ENCODE measurements at regions of chr12 and their contacts with region 1.

Region 1: GRCh38 chr12:102484428-102484958 is 4.1 kb upstream of the IGF1 start:
- DNase-seq: peak; percentile 16
- H3K4me3 ChIP-seq: no peak overlapping the region
- H3K27ac ChIP-seq: no peak overlapping the region
- H3K4me1 ChIP-seq: no peaks in the 10 kb centered on the region
- H3K27me3 ChIP-seq: no peaks in the 10 kb centered on the region
- CTCF ChIP-seq: peak; percentile 82 to 83

Region 2: GRCh38 chr12:101773650-101774162 is 710.8 kb before region 1 on chr12:
- CTCF ChIA-PET with region 1: no interaction called
- dilution Hi-C with region 1: no loop called
- in situ Hi-C with region 1: no loop called
- intact Hi-C with region 1: loop called (anchors 2 kb)
- DNase-seq: peak; percentile 57
- H3K4me3 ChIP-seq: no peak overlapping the region
- H3K27ac ChIP-seq: no peak overlapping the region
- H3K4me1 ChIP-seq: no peaks in the 10 kb centered on the region
- H3K27me3 ChIP-seq: no peaks in the 10 kb centered on the region
- CTCF ChIP-seq: peak; percentile 83 to 96

Region 3: DNA sequence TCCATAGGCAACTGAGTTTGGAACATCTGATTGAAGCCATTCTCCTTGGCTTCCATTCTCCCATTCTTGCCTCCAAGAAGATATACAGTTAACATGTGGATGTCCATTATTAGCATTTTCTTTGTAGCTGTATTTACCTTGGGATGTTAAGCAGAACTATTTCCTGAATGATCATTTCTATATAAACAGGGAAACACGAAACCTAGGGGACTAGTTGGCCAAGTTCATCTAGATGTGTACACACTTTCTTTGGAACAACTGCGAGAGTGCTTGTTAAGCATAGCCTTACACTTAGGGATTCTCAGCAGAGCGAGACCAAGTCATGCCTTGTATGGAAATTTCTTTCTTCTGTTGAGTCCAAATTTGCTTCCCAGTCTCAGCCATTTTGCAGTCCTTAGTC is 565.0 kb before region 1 on chr12:
- CTCF ChIA-PET with region 1: no interaction called
- dilution Hi-C with region 1: no loop called
- in situ Hi-C with region 1: no loop called
- intact Hi-C with region 1: loop called (anchors 1 kb)
- DNase-seq: no peak
- H3K4me3 ChIP-seq: no peak overlapping the region
- H3K27ac ChIP-seq: no peak overlapping the region
- H3K4me1 ChIP-seq: no peaks in the 10 kb centered on the region
- H3K27me3 ChIP-seq: no peaks in the 10 kb centered on the region
- CTCF ChIP-seq: no peak

Region 4: GRCh38 chr12:101962486-101962885 is 522.0 kb before region 1 on chr12:
- CTCF ChIA-PET with region 1: no interaction called
- dilution Hi-C with region 1: no loop called
- in situ Hi-C with region 1: loop called in 1 of 2 experiments (anchors 25 kb)
- intact Hi-C with region 1: no loop called
- DNase-seq: peak; percentile 41
- H3K4me3 ChIP-seq: no peak overlapping the region
- H3K27ac ChIP-seq: no peak overlapping the region
- H3K4me1 ChIP-seq: no peaks in the 10 kb centered on the region
- H3K27me3 ChIP-seq: no peaks in the 10 kb centered on the region
- CTCF ChIP-seq: no peak

Region 5: GRCh38 chr12:102095675-102096263 is 388.7 kb before region 1 on chr12:
- CTCF ChIA-PET with region 1: no interaction called
- dilution Hi-C with region 1: no loop called
- in situ Hi-C with region 1: no loop called
- intact Hi-C with region 1: loop called (anchors 1 kb)
- DNase-seq: peak; percentile 14
- H3K4me3 ChIP-seq: no peak overlapping the region
- H3K27ac ChIP-seq: no peak overlapping the region
- H3K4me1 ChIP-seq: no peaks in the 10 kb centered on the region
- H3K27me3 ChIP-seq: no peaks in the 10 kb centered on the region
- CTCF ChIP-seq: peak; percentile 43 to 56

Region 6: DNA sequence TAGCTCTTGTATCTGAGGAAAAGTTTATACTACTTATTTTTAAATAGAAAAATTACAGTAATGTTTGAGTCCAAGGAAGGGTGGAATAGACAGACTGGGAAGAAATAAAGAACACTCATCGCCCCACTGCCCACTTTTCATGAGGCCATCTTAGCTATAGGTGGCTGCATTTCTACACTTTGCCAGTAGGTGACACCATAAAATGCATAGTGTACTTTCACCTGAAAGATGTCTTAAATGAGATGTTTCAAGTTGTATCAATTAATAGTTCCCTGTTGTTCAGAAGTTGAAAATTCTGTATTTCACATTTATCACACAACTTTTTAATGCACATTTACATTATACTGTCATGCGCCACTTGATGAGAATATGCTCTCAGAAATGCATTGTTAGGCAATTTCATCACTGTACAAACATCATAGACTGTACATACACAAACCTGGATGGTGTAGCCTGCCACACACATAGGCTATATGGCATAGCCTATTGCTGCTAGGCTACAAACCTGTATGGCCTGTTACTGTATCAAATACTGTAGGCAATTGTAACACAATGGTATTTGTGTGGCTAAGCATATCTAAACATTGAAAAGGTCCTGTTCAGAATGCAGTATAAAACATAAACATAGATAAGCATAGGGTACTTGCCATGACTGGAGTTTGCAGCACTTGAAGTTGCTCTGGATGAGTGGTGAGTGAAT is 314.4 kb before region 1 on chr12:
- CTCF ChIA-PET with region 1: interaction called, 3 read pairs
- dilution Hi-C with region 1: no loop called
- in situ Hi-C with region 1: no loop called
- intact Hi-C with region 1: loop called (anchors 1 kb)
- DNase-seq: peak; percentile 15
- H3K4me3 ChIP-seq: no peak overlapping the region
- H3K27ac ChIP-seq: no peak overlapping the region
- H3K4me1 ChIP-seq: no peaks in the 10 kb centered on the region
- H3K27me3 ChIP-seq: no peaks in the 10 kb centered on the region
- CTCF ChIP-seq: peak; percentile 78 to 84

Region 7: GRCh38 chr12:102232446-102232845 is 252.0 kb before region 1 on chr12:
- CTCF ChIA-PET with region 1: no interaction called
- dilution Hi-C with region 1: no loop called
- in situ Hi-C with region 1: no loop called
- intact Hi-C with region 1: no loop called
- DNase-seq: no peak
- H3K4me3 ChIP-seq: no peak overlapping the region
- H3K27ac ChIP-seq: no peak overlapping the region
- H3K4me1 ChIP-seq: no peaks in the 10 kb centered on the region
- H3K27me3 ChIP-seq: no peaks in the 10 kb centered on the region
- CTCF ChIP-seq: no peak

Region 8: GRCh38 chr12:102300824-102301461 is 183.6 kb before region 1 on chr12:
- CTCF ChIA-PET with region 1: no interaction called
- dilution Hi-C with region 1: no loop called
- in situ Hi-C with region 1: no loop called
- intact Hi-C with region 1: loop called (anchors 1 kb)
- DNase-seq: peak; percentile 63
- H3K4me3 ChIP-seq: no peak overlapping the region
- H3K27ac ChIP-seq: no peak overlapping the region
- H3K4me1 ChIP-seq: no peaks in the 10 kb centered on the region
- H3K27me3 ChIP-seq: no peaks in the 10 kb centered on the region
- CTCF ChIP-seq: peak; percentile 57 to 62